ENCODE measurements at regions of chr1 and their contacts with region 1.

Region 1: DNA sequence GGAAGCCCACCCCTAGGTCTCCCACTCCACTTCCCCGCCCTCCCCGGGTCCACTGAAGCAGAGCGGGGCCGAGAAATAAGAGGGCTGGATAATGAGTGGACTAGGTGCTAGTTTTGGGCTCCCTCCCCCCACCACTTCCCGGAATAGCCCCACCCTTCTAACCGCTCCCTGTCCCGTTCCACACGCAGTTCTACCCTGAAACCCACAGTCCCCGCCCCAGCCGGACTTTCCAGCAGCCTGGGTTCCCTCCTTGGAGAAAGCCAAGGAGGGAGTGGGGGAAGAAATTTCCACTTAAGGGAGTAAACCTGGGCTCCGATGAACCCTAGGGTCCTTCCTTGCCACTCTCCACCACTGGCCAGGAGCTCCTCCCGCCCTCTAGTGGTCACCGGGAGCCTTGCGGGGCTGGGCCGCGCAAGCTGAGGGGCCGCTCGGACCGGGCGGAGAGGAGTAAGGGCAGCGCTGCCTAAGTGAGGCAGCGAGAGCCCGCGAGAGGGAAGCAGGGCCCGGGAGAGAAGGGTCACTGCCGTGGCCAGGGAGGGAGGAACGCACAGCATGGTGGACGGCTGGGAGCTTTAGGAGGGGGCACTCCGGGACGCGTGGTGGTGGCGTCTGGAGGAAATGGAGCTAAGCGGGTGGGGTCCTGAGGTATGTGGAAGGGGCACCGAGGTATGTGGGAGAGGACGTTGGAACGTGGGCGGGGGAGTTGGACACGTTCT is 14.3 kb downstream of the THBS3 start:
- DNase-seq: peak; percentile 71
- H3K4me3 Mint-ChIP-seq: peak overlapping the region; percentile 91
- H3K27ac Mint-ChIP-seq: peak overlapping the region; percentile 97
- H3K4me1 Mint-ChIP-seq: peaks cover 25% of the 10 kb centered on the region
- H3K27me3 Mint-ChIP-seq: no peaks in the 10 kb centered on the region

Region 2: DNA sequence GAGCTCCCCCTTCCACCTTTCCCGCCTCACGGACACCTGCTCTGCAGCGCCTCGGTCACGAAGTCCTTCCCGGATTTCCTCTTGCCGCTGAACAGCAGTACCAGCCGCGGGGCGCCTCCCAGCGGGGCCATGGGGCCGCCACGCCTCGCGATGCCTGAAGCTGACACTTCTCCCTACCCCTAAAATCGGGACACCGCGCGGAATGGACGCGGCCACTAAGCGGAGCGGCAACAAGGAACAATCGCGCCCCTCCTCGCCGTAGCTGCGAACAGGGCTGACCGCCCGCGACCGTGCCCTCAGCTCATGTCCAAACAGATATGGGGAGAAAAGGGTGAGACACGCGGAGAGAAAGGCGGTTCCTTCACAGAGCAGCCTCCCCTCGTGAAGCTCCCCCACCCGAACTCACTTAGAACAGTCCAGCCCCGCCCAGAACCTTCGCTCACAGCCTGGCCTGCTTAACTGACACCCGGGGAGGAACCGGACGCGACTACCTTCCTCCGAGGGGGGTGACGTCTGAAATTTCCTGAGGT is 256.8 kb before region 1 on chr1 and contains the start of gene PMVK:
- intact Hi-C with region 1: no loop called
- DNase-seq: peak; percentile 94
- H3K4me3 Mint-ChIP-seq: peak within 1 kb of the TSS; percentile 93
- H3K27ac Mint-ChIP-seq: peak within 1 kb of the TSS; percentile 95
- H3K4me1 Mint-ChIP-seq: peaks cover 45% of the 10 kb centered on the region
- H3K27me3 Mint-ChIP-seq: no peaks in the 10 kb centered on the region
- total RNA-seq, gene PMVK: 44.7 and 44.8 TPM in 2 replicates

Region 3: DNA sequence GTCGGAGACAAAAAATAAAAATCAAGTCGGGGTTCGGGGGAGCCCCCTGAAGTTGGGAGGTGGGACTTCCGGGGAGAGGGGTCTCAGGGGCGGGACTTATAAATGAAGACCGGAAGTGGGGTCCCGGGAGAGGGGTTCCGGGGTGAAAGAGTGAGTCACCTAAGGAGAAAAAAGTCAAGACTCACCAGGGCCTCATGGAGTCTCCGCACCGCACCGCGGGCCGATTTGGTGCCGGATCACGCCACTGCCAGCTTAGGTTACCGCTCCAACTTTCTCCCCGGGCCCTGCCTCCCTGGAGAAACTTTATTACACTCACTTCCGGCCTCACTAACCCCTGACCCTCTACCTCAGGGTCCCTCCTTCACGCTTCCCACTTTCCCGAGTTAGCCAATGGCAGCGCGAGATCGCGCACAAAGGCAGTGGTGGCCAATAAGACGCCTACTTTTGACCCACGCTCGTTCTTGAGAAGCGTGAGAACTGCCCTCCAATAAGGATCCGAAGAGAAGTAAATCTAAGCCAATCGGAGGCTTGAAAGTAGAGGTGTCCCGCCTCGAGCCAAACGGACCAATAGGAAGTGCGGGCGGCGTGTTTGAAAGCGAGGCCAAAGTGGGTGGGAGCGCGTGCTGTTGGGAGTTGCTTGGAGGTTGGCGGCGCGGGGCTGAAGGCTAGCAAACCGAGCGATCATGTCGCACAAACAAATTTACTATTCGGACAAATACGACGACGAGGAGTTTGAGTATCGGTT is 219.2 kb before region 1 on chr1 and contains the start of gene CKS1B:
- intact Hi-C with region 1: loop called (anchors 2 kb)
- DNase-seq: peak; percentile 97
- H3K4me3 Mint-ChIP-seq: no peak within 1 kb of the TSS
- H3K27ac Mint-ChIP-seq: no peak within 1 kb of the TSS
- H3K4me1 Mint-ChIP-seq: peaks cover 32% of the 10 kb centered on the region
- H3K27me3 Mint-ChIP-seq: no peaks in the 10 kb centered on the region
- total RNA-seq, gene CKS1B: 169 and 178 TPM in 2 replicates

Region 4: GRCh38 chr1:155172732-155173477 is 20.5 kb before region 1 on chr1 and contains the start of gene KRTCAP2:
- intact Hi-C with region 1: loop called (anchors 2 kb)
- DNase-seq: peak; percentile 94
- H3K4me3 Mint-ChIP-seq: peak within 1 kb of the TSS; percentile 96
- H3K27ac Mint-ChIP-seq: peak within 1 kb of the TSS; percentile 96
- H3K4me1 Mint-ChIP-seq: peaks cover 42% of the 10 kb centered on the region
- H3K27me3 Mint-ChIP-seq: no peaks in the 10 kb centered on the region
- total RNA-seq, gene KRTCAP2: 237 and 247 TPM in 2 replicates

Region 5: DNA sequence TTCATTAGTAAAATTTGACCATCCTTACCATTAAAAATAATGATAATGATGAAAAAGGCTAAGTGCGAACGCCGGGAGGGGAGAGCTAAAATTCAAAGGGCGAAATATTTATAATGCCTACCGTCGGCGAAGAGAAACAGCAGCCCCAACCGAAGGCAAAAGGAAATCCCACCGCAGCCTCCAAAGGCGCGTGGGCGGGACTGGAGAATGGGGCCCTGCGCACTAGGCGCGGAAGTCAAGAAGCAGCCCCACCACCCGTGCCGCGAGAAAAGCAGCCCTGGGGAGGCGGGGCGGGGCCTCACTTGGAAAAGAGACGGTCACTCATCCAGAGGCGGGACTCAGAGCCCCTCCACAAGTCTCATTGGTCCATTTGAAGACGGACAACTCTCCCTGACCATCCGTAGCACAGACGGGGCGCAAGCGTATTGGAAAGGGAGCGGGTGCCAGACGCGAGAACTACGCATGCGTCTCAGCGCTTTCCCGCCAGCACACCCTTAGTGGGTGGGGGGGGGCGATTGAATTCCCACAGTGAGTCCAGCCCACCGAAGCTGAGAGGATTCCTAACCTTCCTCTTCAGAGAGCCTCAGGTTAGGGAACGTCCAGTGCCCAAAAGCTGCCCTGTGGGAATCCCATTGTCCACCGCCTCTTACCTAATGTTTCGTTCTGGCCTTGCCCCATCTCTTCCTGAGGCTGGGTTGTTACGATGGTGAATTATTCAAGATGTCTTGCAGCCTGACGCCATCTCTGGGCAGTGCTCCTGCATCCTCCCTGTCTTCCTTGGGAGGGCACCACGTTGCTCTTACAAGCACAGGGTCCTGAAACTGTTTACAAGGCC is 34.0 kb after region 1 on chr1:
- intact Hi-C with region 1: loop called (anchors 5 kb)
- DNase-seq: peak; percentile 99
- H3K4me3 Mint-ChIP-seq: peak overlapping the region; percentile 95
- H3K27ac Mint-ChIP-seq: peak overlapping the region; percentile 94
- H3K4me1 Mint-ChIP-seq: peaks cover 26% of the 10 kb centered on the region
- H3K27me3 Mint-ChIP-seq: no peaks in the 10 kb centered on the region

Region 6: DNA sequence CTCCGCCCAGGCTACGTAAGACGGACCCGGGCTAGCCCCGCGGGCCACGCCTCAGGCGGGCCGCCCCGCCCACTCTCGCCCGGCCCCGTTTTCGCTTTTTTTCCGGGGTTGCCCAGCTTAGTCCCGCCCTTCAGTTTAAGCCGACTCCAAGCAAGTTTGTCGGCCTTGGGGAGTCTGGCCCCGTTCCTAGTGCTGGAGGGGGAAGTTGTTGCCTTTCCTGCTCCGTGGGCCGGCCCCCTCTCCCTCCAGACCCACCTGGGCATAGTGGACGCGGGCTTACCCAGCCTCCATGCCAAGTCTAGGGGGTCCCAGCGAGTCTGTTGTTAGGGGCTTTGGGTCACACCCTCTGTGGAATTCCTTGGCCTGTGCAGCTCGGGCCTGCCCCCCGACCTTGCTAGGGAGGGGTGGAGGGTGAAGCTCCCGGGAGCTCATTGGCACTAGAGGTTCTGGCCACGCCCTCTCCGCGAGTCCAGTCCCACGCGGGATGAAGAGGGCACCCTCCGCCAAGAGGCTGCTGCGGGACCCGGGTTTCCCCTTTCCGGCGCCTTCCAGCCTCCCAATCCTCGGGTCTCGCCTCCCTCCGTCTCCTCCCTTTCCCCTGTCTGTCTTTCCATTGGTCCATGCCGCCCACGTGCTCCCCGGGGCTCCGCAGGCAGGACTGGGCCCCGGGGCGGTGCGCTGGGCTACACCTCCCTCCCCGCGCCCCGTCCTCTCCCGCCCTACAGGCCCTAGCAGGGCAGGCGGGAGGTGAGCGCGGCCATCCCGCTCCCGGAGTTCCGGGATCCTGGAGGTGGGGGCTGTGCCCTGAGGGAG is 130.6 kb after region 1 on chr1:
- intact Hi-C with region 1: loop called (anchors 5 kb)
- DNase-seq: peak; percentile 89
- H3K4me3 Mint-ChIP-seq: peak overlapping the region; percentile 81
- H3K27ac Mint-ChIP-seq: peak overlapping the region; percentile 79
- H3K4me1 Mint-ChIP-seq: peaks cover 30% of the 10 kb centered on the region
- H3K27me3 Mint-ChIP-seq: no peaks in the 10 kb centered on the region